Caco-2 (cell line): ENCODE measurements at regions of chr4 and their contacts with region 1.

Region 1: GRCh38 chr4:184287697-184288255 is 70.1 kb upstream of the ENPP6 start:
- DNase-seq: peak; percentile 82 to 83
- H3K4me3 ChIP-seq: no peak overlapping the region
- H3K4me3 Mint-ChIP-seq: peak overlapping the region; percentile 27
- H3K27ac Mint-ChIP-seq: peak overlapping the region; percentile 62
- H3K4me1 ChIP-seq: peaks cover 18% of the 10 kb centered on the region
- H3K4me1 Mint-ChIP-seq: peaks cover 13% of the 10 kb centered on the region
- H3K27me3 ChIP-seq: no peaks in the 10 kb centered on the region
- H3K27me3 Mint-ChIP-seq: no peaks in the 10 kb centered on the region
- CTCF ChIP-seq: no peak

Region 2: DNA sequence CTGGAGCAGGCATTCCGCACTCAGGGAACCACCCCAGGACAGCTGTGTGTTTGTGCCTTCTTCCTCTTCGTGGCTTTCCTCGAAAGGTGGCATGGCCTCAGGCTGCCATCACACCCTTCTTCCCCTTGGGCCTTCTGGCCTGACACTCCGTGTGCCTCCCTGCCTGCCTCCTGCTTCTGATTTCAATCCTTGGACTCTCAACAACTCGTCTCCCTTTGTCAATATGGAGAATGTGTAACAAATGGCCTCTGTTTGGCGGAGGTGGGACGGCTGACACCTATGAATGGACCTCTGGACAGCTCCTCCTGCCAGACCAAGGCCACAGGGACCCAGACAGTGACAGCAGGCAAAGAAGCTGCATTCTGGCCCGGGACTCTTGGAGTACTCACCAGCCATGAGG is 207.1 kb before region 1 on chr4:
- CTCF ChIA-PET with region 1: no interaction called
- POLR2A ChIA-PET with region 1: no interaction called
- intact Hi-C with region 1: no loop called
- DNase-seq: no peak
- H3K4me3 ChIP-seq: no peak overlapping the region
- H3K4me3 Mint-ChIP-seq: no peak overlapping the region
- H3K27ac Mint-ChIP-seq: no peak overlapping the region
- H3K4me1 ChIP-seq: no peaks in the 10 kb centered on the region
- H3K4me1 Mint-ChIP-seq: no peaks in the 10 kb centered on the region
- H3K27me3 ChIP-seq: no peaks in the 10 kb centered on the region
- H3K27me3 Mint-ChIP-seq: peaks cover 4% of the 10 kb centered on the region
- CTCF ChIP-seq: no peak

Region 3: DNA sequence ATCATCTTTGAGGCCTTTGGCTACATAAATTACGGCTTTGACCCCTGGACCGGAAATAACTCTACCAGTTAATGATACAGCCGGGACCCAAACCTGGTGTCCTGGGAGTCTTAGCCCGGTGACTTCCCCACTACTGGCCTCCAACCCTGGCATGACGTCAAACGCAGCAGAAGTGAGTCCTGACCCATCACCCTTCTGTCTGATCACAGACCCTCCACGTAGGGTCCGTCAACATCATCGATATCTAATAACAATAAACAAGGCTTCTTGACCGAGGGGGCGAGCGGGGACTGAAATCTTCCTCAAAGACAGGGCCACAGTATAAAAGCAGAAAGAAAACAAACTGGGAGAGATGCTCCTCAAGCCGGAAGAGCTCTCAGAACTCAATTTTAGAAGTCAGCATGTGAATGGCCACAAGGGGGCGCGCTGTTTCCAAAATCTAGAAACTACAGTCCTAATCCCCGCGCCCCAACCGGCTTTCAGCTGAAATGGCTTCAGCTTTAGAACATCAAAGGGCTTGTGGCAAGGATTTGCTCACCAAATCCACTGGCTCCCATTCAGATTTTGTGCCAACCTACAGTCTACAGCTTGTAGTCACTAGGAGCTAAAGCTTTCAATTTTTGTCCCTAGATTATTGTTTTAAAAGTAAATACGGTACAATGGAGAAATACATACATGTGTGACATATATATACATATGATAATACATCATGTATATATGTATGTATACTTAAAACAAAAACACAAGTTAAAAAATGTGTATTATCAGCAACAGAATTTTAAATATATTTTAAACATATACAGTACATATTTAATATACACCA is 23.7 kb before region 1 on chr4:
- CTCF ChIA-PET with region 1: interaction called, 13 read pairs
- POLR2A ChIA-PET with region 1: no interaction called
- intact Hi-C with region 1: loop called (anchors 1 kb)
- DNase-seq: peak; percentile 85 to 86
- H3K4me3 ChIP-seq: no peak overlapping the region
- H3K4me3 Mint-ChIP-seq: peak overlapping the region; percentile 13
- H3K27ac Mint-ChIP-seq: no peak overlapping the region
- H3K4me1 ChIP-seq: no peaks in the 10 kb centered on the region
- H3K4me1 Mint-ChIP-seq: peaks cover 14% of the 10 kb centered on the region
- H3K27me3 ChIP-seq: no peaks in the 10 kb centered on the region
- H3K27me3 Mint-ChIP-seq: peaks cover 3% of the 10 kb centered on the region
- CTCF ChIP-seq: peak; percentile 81

Region 4: GRCh38 chr4:184461711-184462441 is 174.1 kb after region 1 on chr4:
- CTCF ChIA-PET with region 1: interaction called, 4 read pairs
- POLR2A ChIA-PET with region 1: no interaction called
- intact Hi-C with region 1: loop called (anchors 2 kb)
- DNase-seq: no peak
- H3K4me3 ChIP-seq: no peak overlapping the region
- H3K4me3 Mint-ChIP-seq: no peak overlapping the region
- H3K27ac Mint-ChIP-seq: peak overlapping the region; percentile 57
- H3K4me1 ChIP-seq: peaks cover 32% of the 10 kb centered on the region
- H3K4me1 Mint-ChIP-seq: peaks cover 36% of the 10 kb centered on the region
- H3K27me3 ChIP-seq: no peaks in the 10 kb centered on the region
- H3K27me3 Mint-ChIP-seq: no peaks in the 10 kb centered on the region
- CTCF ChIP-seq: no peak

Region 5: GRCh38 chr4:184538023-184538599 is 250.3 kb after region 1 on chr4:
- CTCF ChIA-PET with region 1: interaction called, 13 read pairs
- POLR2A ChIA-PET with region 1: interaction called, 8 read pairs
- intact Hi-C with region 1: loop called (anchors 1 kb)
- DNase-seq: peak; percentile 83
- H3K4me3 ChIP-seq: peak overlapping the region; percentile 39
- H3K4me3 Mint-ChIP-seq: peak overlapping the region; percentile 86
- H3K27ac Mint-ChIP-seq: peak overlapping the region; percentile 90
- H3K4me1 ChIP-seq: peaks cover 16% of the 10 kb centered on the region
- H3K4me1 Mint-ChIP-seq: peaks cover 23% of the 10 kb centered on the region
- H3K27me3 ChIP-seq: no peaks in the 10 kb centered on the region
- H3K27me3 Mint-ChIP-seq: no peaks in the 10 kb centered on the region
- CTCF ChIP-seq: peak; percentile 63 to 67

Region 6: GRCh38 chr4:184655889-184656869 is 368.4 kb after region 1 on chr4:
- CTCF ChIA-PET with region 1: no interaction called
- POLR2A ChIA-PET with region 1: no interaction called
- intact Hi-C with region 1: no loop called
- DNase-seq: no peak
- H3K4me3 ChIP-seq: no peak overlapping the region
- H3K4me3 Mint-ChIP-seq: no peak overlapping the region
- H3K27ac Mint-ChIP-seq: no peak overlapping the region
- H3K4me1 ChIP-seq: no peaks in the 10 kb centered on the region
- H3K4me1 Mint-ChIP-seq: peaks cover 7% of the 10 kb centered on the region
- H3K27me3 ChIP-seq: no peaks in the 10 kb centered on the region
- H3K27me3 Mint-ChIP-seq: no peaks in the 10 kb centered on the region
- CTCF ChIP-seq: no peak